Left cardiac atrium (tissue), 4 donors: ENCODE measurements at regions of chr7 and their contacts with region 1.

Region 1: GRCh38 chr7:51146816-51147586 is 169.6 kb downstream of the COBL start:
- DNase-seq: no peak
- ATAC-seq: no peak

Region 2: GRCh38 chr7:50474382-50475160 is 672.4 kb before region 1 on chr7:
- intact Hi-C with region 1: loop called (anchors 5 kb)
- DNase-seq: no peak
- ATAC-seq: no peak